ENCODE measurements at regions of chr1 and their contacts with region 1.

Region 1: DNA sequence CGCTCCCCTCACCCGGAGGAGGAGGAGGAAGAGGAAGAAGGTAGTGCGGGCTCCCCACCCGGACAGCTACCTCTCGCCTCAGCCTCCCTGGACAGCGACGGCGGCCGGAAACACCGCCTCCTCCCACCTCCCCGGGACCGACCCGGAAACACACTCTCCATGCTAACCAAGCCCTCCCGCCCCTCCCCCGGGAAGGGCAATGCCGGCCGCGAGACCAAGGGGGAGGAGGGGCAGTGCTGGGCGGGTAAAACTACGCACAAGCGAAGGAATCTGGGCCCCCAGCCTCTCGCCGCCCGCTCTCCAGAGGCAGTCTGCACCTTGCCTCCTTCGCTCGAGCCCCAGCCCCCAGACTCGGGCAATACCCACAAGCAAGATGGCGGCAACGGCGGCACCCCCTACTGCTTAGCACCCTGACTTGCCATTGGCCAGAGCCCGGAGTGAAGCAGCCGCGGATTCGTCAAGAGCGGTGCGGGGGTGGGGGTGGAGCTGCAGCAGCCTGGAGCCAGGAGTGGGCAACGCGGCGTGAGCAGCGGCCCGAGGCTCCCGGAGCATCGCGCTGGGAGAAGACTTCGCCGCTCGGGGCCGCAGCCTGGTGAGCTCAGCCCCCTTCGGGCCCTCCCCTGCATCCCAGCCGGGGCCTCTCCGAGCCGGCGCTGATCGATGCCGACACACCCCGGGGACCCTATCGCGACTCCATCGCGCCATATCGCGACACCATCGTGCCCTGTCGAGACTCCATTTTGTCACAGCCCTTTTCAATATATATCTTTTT is at the starts of genes KIAA0319L and NCDN:
- DNase-seq: peak; percentile 91 to 99
- H3K4me3 ChIP-seq: peak within 1 kb of the TSS; percentile 85 to 98
- H3K27ac ChIP-seq: peak within 1 kb of the TSS; percentile 95 to 97
- H3K4me1 ChIP-seq: peaks cover 4 to 46% of the 10 kb centered on the region in 2 donors
- H3K27me3 ChIP-seq: no peaks in the 10 kb centered on the region
- CTCF ChIP-seq: no peak
- total RNA-seq, gene KIAA0319L: 44.9 TPM
- total RNA-seq, gene NCDN: 20.1 TPM

Region 2: GRCh38 chr1:35192853-35193664 is 364.4 kb before region 1 on chr1 and contains the start of gene SFPQ:
- intact Hi-C with region 1: loop called (anchors 2 kb)
- DNase-seq: peak; percentile 94 to 99
- H3K4me3 ChIP-seq: peak within 1 kb of the TSS; percentile 72 to 100
- H3K27ac ChIP-seq: peak within 1 kb of the TSS; percentile 99
- H3K4me1 ChIP-seq: peaks cover 5 to 22% of the 10 kb centered on the region in 2 donors
- H3K27me3 ChIP-seq: no peaks in the 10 kb centered on the region
- CTCF ChIP-seq: no peak
- total RNA-seq, gene SFPQ: 231 TPM

Region 3: GRCh38 chr1:35451125-35451528 is 106.4 kb before region 1 on chr1:
- intact Hi-C with region 1: loop called (anchors 2 kb)
- DNase-seq: peak; percentile 19 to 88
- H3K4me3 ChIP-seq: no peak overlapping the region
- H3K27ac ChIP-seq: no peak overlapping the region
- H3K4me1 ChIP-seq: peaks cover 9 to 16% of the 10 kb centered on the region in 2 donors
- H3K27me3 ChIP-seq: no peaks in the 10 kb centered on the region
- CTCF ChIP-seq: peak; percentile 75 to 88 (median 85)

Region 4: DNA sequence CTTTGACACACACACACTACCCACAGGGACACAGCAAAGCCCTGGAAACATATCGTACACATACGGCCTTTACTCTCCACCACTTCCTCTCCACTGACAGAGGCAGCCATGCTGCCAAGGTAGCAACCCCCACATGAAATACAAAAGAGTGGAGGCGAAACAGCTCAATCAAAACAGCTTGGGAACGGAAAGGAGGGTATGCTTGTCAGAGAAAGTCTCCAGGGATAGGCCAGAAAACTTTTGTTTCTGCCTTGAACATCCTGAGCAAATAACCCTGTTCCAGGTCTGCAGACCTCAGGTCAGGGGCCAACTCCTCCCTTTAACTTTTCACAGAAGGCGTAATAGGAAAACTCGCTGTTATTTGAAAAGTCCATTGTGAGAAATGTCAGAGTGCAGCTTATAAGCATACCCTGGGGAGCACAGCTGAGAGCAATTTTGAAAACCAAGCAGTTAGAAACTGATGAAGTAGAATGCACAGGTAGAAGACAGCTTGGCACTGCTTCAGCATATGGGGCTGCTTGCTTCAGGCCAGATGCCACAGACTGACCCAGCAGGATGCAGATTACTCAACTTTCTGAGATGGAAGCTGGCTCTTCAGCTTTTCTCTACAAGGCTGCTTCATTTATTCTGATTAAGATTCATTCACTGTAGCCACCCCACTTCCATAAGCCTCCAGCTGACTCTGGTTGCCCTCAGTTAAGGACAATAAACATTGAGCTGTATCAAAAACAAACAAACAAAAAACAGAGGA is 18.2 kb before region 1 on chr1:
- intact Hi-C with region 1: loop called (anchors 2 kb)
- DNase-seq: no peak
- H3K4me3 ChIP-seq: no peak overlapping the region
- H3K27ac ChIP-seq: peak overlapping the region; percentile 70 to 79
- H3K4me1 ChIP-seq: peaks cover 18 to 35% of the 10 kb centered on the region in 2 donors
- H3K27me3 ChIP-seq: no peaks in the 10 kb centered on the region
- CTCF ChIP-seq: no peak

Region 5: DNA sequence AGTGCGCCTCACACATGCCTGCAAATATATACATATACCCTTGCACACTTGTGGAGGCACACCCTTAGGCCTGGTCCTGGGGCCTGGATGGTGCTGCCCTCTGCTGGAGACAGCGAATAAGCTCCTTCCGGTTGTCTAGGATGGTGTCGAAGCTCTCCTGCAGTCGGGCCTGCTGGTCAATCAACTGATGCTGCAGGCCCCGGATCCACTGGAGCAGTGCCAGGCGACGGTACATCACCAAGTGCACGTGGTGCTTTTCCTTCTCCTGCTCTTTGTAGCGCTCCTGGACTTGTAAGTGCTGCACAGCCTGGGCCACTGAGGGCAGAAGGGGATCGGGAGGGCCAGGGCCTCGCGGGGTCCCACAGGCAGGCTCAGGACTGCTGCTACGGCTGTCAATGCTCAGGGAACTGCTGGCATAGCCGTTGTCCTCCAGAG is 158.1 kb after region 1 on chr1:
- intact Hi-C with region 1: loop called (anchors 2 kb)
- DNase-seq: peak; percentile 15 to 71
- H3K4me3 ChIP-seq: peak overlapping the region; percentile 5 to 42
- H3K27ac ChIP-seq: no peak overlapping the region
- H3K4me1 ChIP-seq: peaks cover 17 to 26% of the 10 kb centered on the region in 2 donors
- H3K27me3 ChIP-seq: no peaks in the 10 kb centered on the region
- CTCF ChIP-seq: peak; percentile 59 to 79 (median 68)